HepG2 (cell line): ENCODE measurements at regions of chr12 and their contacts with region 1.

Region 1: GRCh38 chr12:106357549-106358395 is at the start of gene POLR3B:
- DNase-seq: peak; percentile 84
- ATAC-seq: peak; percentile 89
- H3K4me3 ChIP-seq: peak within 1 kb of the TSS; percentile 64 to 78 (median 65)
- H3K27ac ChIP-seq: peak within 1 kb of the TSS; percentile 91
- H3K4me1 ChIP-seq: peaks cover 40% of the 10 kb centered on the region
- H3K27me3 ChIP-seq: no peaks in the 10 kb centered on the region; a peak in 1 of 5 replicates
- CTCF ChIP-seq: peak; percentile 96
- EP300 ChIP-seq: peak; percentile 23 to 30; a peak in 3 of 4 replicates
- POLR2A ChIP-seq: peak; percentile 87 to 89
- RAD21 ChIP-seq: peak; percentile 86
- total RNA-seq, gene POLR3B: 13.1 and 22.9 TPM in 2 replicates

Region 2: GRCh38 chr12:106223485-106224354 is 134.1 kb before region 1 on chr12:
- CTCF ChIA-PET with region 1: interaction called, 4 read pairs
- POLR2A ChIA-PET with region 1: interaction called, 13 read pairs
- in situ Hi-C with region 1: no loop called
- intact Hi-C with region 1: no loop called
- DNase-seq: peak; percentile 45
- ATAC-seq: peak; percentile 90
- H3K4me3 ChIP-seq: no peak overlapping the region
- H3K27ac ChIP-seq: no peak overlapping the region
- H3K4me1 ChIP-seq: peaks cover 11% of the 10 kb centered on the region
- H3K27me3 ChIP-seq: peaks cover 0 to 4% of the 10 kb centered on the region in 2 experiments; a peak in 1 of 5 replicates
- CTCF ChIP-seq: peak; percentile 93
- EP300 ChIP-seq: no peak
- POLR2A ChIP-seq: no peak
- RAD21 ChIP-seq: peak; percentile 84

Region 3: GRCh38 chr12:106302401-106303201 is 55.2 kb before region 1 on chr12 and contains the start of gene TCP11L2:
- CTCF ChIA-PET with region 1: no interaction called
- POLR2A ChIA-PET with region 1: interaction called, 26 read pairs
- in situ Hi-C with region 1: no loop called
- intact Hi-C with region 1: no loop called
- DNase-seq: peak; percentile 49
- ATAC-seq: peak; percentile 82
- H3K4me3 ChIP-seq: peak within 1 kb of the TSS; percentile 71 to 96 (median 93)
- H3K27ac ChIP-seq: peak within 1 kb of the TSS; percentile 93
- H3K4me1 ChIP-seq: peaks cover 73% of the 10 kb centered on the region
- H3K27me3 ChIP-seq: no peaks in the 10 kb centered on the region
- CTCF ChIP-seq: no peak
- EP300 ChIP-seq: no peak
- POLR2A ChIP-seq: peak; percentile 42 to 56; a peak in 3 of 4 replicates
- RAD21 ChIP-seq: no peak; the same call in 1 of the 2 replicates
- total RNA-seq, gene TCP11L2: 4.6 TPM in 2 replicates

Region 4: GRCh38 chr12:106345739-106346138 is 12.0 kb before region 1 on chr12:
- CTCF ChIA-PET with region 1: no interaction called
- POLR2A ChIA-PET with region 1: interaction called, 10 read pairs
- in situ Hi-C with region 1: no loop called
- intact Hi-C with region 1: no loop called
- DNase-seq: peak; percentile 77
- ATAC-seq: peak; percentile 93
- H3K4me3 ChIP-seq: no peak overlapping the region
- H3K27ac ChIP-seq: no peak overlapping the region
- H3K4me1 ChIP-seq: peaks cover 20% of the 10 kb centered on the region
- H3K27me3 ChIP-seq: peaks cover 0 to 4% of the 10 kb centered on the region in 2 experiments; a peak in 1 of 5 replicates
- CTCF ChIP-seq: peak; percentile 86
- EP300 ChIP-seq: no peak
- POLR2A ChIP-seq: no peak
- RAD21 ChIP-seq: peak; percentile 86

Region 5: DNA sequence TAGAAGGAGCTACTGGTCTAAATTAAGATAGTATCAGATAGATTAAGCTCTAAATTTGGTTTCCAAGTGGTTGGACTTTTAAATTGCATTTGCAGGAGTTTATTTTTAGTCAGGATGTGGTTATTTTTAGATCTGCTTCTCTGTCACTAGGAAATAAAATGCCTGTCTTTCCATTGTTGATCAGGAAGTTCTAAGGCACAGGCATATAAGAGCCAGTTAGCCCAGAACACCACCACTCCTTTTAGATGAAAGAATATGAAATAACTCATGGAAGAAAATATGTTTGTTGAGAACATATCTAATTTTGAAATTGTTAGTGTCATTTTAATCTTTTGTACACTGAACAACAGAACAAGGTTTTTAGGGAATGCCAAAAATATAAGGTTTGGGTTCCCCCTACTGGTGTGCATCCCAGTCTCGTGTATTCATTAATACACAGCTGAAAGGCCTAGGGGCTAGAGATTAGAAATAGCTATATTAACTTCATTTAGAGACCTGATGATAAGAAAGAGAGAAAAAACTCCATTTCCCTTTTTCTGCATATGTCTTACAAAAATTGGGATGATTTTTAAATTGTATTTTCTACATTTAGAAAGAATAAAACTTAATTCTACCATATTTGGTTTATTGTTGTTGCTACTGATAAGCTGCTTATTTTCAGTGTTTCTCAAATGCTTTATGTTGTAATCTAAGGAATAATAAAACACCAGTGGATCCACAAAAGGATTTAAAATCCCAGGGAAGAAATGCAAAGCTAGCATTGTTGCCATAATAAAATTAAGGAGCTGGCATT is 483.9 kb after region 1 on chr12:
- CTCF ChIA-PET with region 1: no interaction called
- POLR2A ChIA-PET with region 1: interaction called, 4 read pairs
- in situ Hi-C with region 1: no loop called
- intact Hi-C with region 1: loop called (anchors 10 kb)
- DNase-seq: peak; percentile 30
- ATAC-seq: peak; percentile 71
- H3K4me3 ChIP-seq: no peak overlapping the region
- H3K27ac ChIP-seq: peak overlapping the region; percentile 9
- H3K4me1 ChIP-seq: peaks cover 26% of the 10 kb centered on the region
- H3K27me3 ChIP-seq: no peaks in the 10 kb centered on the region
- CTCF ChIP-seq: peak; percentile 68
- EP300 ChIP-seq: no peak
- POLR2A ChIP-seq: no peak
- RAD21 ChIP-seq: peak; percentile 36; the same call in 1 of the 2 replicates

Region 6: GRCh38 chr12:106955377-106956047 is 597.7 kb after region 1 on chr12 and contains the start of gene TMEM263:
- CTCF ChIA-PET with region 1: no interaction called
- POLR2A ChIA-PET with region 1: interaction called, 25 read pairs
- in situ Hi-C with region 1: no loop called
- intact Hi-C with region 1: no loop called
- DNase-seq: peak; percentile 91
- ATAC-seq: peak; percentile 84
- H3K4me3 ChIP-seq: peak within 1 kb of the TSS; percentile 89 to 98 (median 96)
- H3K27ac ChIP-seq: peak within 1 kb of the TSS; percentile 97
- H3K4me1 ChIP-seq: peaks cover 51% of the 10 kb centered on the region
- H3K27me3 ChIP-seq: no peaks in the 10 kb centered on the region; a peak in 1 of 5 replicates
- CTCF ChIP-seq: no peak
- EP300 ChIP-seq: no peak
- POLR2A ChIP-seq: peak; percentile 81 to 96
- RAD21 ChIP-seq: peak; percentile 58; the same call in 1 of the 2 replicates
- total RNA-seq, gene TMEM263: 58.6 and 73.7 TPM in 2 replicates